ENCODE measurements at regions of chr5 and their contacts with region 1.

Region 1: DNA sequence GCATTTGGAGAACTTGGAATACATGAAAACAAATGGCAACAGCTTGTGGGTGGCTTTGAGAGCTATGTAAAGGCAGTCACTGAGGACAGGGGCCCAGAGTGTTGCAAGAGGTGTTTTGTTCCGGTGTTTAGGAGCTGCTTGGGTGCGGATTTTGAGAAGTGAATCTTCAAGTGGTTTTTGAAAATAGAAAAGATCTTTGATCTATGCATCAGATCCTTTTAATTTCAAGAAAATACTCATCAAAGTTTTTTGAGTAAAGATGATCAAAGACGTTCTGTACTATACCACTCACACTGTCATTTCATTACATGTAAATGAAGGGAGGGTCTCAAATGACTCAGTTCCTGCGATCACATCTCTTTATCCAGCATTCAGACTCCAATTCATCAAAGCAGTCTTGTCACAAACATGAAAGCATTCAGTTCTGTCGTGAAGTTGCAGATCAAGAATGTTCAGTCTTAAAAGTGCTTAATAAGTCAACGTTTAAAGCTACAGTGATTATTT is 112.5 kb downstream of the WDR41 start:
- DNase-seq: peak; percentile 26
- H3K4me3 Mint-ChIP-seq: no peak overlapping the region
- H3K27ac Mint-ChIP-seq: peak overlapping the region; percentile 75
- H3K4me1 Mint-ChIP-seq: peaks cover 27% of the 10 kb centered on the region
- H3K27me3 Mint-ChIP-seq: no peaks in the 10 kb centered on the region

Region 2: GRCh38 chr5:77316871-77317661 is 62.5 kb before region 1 on chr5:
- CTCF ChIA-PET with region 1: no interaction called
- POLR2A ChIA-PET with region 1: no interaction called
- DNase-seq: no peak
- H3K4me3 Mint-ChIP-seq: no peak overlapping the region
- H3K27ac Mint-ChIP-seq: no peak overlapping the region
- H3K4me1 Mint-ChIP-seq: no peaks in the 10 kb centered on the region
- H3K27me3 Mint-ChIP-seq: peaks cover 25% of the 10 kb centered on the region

Region 3: DNA sequence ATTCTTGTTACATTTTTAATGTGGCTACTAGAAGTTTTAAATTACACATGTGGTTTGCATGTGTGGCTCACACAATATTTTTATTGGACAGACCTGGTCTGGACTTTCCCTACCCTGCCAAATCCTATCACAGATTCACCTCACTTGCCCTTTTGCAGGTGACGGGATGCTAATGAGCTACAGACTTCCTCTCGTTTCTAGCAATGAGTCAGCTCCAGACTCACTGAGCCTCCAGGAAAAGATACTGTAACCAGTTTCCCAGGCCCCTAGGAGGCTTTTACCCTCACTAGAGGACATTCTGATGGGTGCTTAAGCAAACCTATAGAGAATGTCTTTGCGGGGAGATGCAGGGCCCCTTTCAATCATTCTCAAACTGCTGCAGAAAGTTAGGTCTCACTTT is 22.9 kb before region 1 on chr5:
- CTCF ChIA-PET with region 1: interaction called, 4 read pairs
- POLR2A ChIA-PET with region 1: interaction called, 11 read pairs
- DNase-seq: peak; percentile 22
- H3K4me3 Mint-ChIP-seq: no peak overlapping the region
- H3K27ac Mint-ChIP-seq: no peak overlapping the region
- H3K4me1 Mint-ChIP-seq: peaks cover 14% of the 10 kb centered on the region
- H3K27me3 Mint-ChIP-seq: peaks cover 11% of the 10 kb centered on the region